ENCODE measurements at regions of chr19 and their contacts with region 1.

Region 1: DNA sequence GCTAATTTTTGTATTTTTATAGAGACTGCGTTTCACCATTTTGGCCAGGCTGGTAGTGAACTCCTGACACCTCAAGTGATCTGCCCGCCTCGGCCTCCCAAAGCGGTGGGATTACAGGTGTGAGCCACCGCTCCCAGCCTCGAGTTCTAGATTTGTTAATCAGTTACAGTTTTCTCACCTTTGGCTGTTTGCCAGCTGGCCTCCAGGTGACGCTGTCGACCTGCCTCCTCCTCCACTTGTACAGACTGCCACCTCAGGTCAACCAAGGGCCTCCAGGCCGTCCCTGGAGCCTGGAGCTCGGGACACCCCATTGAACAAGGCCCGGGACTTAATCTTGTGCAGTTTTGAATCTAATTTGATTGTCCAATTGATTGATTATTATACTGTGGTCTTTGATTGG is 45.5 kb downstream of the IER2 start:
- DNase-seq: peak; percentile 77
- ATAC-seq: peak; percentile 67
- H3K4me3 ChIP-seq: no peak overlapping the region
- H3K4me3 Mint-ChIP-seq: no peak overlapping the region
- H3K27ac ChIP-seq: no peak overlapping the region
- H3K27ac Mint-ChIP-seq: peak overlapping the region; percentile 67
- H3K4me1 ChIP-seq: peaks cover 26 to 35% of the 10 kb centered on the region in 2 donors
- H3K4me1 Mint-ChIP-seq: peaks cover 21% of the 10 kb centered on the region
- H3K27me3 ChIP-seq: no peaks in the 10 kb centered on the region
- H3K27me3 Mint-ChIP-seq: no peaks in the 10 kb centered on the region
- CTCF ChIP-seq: peak; percentile 82

Region 2: DNA sequence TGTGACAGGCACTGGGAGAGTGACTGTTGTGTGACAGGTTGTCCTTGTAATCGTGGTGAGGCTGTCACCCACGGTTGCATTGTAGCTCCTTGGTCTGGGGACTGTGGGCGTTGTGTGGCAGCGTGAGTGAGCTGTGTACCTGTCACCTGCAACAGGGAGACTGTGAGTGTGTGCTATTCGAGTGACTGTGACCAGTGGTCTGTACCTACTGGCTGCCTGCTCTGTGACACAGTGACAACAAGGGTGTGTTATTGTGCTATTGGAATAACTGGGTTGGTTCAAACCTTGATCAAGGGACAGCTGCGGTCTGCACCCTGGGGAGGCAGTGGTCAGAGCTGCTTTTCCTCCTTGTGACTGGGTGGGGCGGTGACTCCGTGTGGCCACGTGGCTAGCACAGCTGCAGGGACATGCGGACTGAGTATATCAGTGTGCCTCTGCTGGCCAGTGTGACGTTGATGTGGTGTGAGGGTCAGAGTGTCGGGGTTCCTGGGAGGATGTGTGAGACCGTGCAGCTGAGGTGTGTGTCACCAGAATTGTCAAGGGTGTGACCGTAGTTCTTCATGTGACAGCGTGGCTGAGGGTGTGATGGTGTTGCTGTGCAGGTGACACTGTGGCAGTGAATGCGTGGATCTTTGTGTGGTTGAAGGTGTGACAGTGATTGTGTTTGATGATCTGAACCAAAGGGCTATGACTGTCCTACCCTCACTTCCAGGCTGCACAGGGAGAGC is 210.5 kb before region 1 on chr19:
- CTCF ChIA-PET with region 1: no interaction called
- POLR2A ChIA-PET with region 1: no interaction called
- intact Hi-C with region 1: no loop called
- DNase-seq: peak; percentile 70
- ATAC-seq: peak; percentile 42
- H3K4me3 ChIP-seq: no peak overlapping the region
- H3K4me3 Mint-ChIP-seq: peak overlapping the region; percentile 7
- H3K27ac ChIP-seq: no peak overlapping the region
- H3K27ac Mint-ChIP-seq: peak overlapping the region; percentile 39
- H3K4me1 ChIP-seq: peaks cover 26 to 37% of the 10 kb centered on the region in 2 donors
- H3K4me1 Mint-ChIP-seq: peaks cover 10% of the 10 kb centered on the region
- H3K27me3 ChIP-seq: peaks cover 0 to 10% (median 2%) of the 10 kb centered on the region in 4 experiments
- H3K27me3 Mint-ChIP-seq: peaks cover 4% of the 10 kb centered on the region
- CTCF ChIP-seq: no peak

Region 3: DNA sequence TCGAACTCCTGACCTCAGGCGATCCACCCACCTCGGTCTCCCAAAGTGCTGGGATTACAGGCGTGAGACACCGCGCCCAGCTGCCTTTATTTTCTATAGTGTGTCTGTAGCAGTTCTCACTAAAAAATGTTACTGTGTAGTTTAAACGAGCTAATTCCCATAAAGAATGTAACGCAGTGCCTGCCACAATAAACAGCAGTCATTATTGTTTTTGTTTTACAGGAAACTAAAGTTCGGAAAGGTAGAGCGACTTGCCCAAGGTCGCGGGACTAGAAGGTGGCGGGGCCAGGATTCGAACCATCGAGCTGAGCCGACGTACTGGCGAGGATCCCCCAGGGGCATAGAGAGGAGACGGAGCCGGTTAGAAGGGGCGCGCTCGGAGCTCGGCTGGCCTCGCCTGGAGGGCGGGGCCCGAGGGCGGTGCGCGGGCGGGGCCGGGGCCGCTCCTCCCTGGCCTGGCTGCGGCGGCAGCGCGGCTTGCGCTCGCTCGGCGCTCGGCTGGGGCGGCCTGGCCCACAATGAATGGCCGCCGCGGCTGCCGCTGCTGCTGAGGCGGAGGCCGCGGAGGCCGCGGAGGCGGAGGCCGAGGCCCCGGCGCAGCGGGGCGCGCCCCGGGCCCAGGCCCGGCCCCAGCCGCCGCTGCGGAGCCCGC is 77.8 kb before region 1 on chr19 and contains the start of gene NACC1:
- CTCF ChIA-PET with region 1: interaction called, 11 read pairs
- POLR2A ChIA-PET with region 1: no interaction called
- intact Hi-C with region 1: no loop called
- DNase-seq: peak; percentile 92
- ATAC-seq: peak; percentile 78
- H3K4me3 ChIP-seq: peak within 1 kb of the TSS; percentile 81 to 97 (median 85)
- H3K4me3 Mint-ChIP-seq: peak within 1 kb of the TSS; percentile 99
- H3K27ac ChIP-seq: peak within 1 kb of the TSS; percentile 47 to 81
- H3K27ac Mint-ChIP-seq: peak within 1 kb of the TSS; percentile 95
- H3K4me1 ChIP-seq: peaks cover 26 to 46% of the 10 kb centered on the region in 2 donors
- H3K4me1 Mint-ChIP-seq: peaks cover 55% of the 10 kb centered on the region
- H3K27me3 ChIP-seq: no peaks in the 10 kb centered on the region
- H3K27me3 Mint-ChIP-seq: no peaks in the 10 kb centered on the region
- CTCF ChIP-seq: no peak
- total RNA-seq, gene NACC1: 25.9 and 30.6 TPM in 2 replicates

Region 4: GRCh38 chr19:13162518-13163314 is 33.0 kb before region 1 on chr19:
- CTCF ChIA-PET with region 1: interaction called, 154 read pairs
- POLR2A ChIA-PET with region 1: interaction called, 19 read pairs
- intact Hi-C with region 1: no loop called
- DNase-seq: peak; percentile 85
- ATAC-seq: peak; percentile 42
- H3K4me3 ChIP-seq: peak overlapping the region; percentile 24 to 71 (median 61)
- H3K4me3 Mint-ChIP-seq: peak overlapping the region; percentile 92
- H3K27ac ChIP-seq: peak overlapping the region; percentile 85 to 94
- H3K27ac Mint-ChIP-seq: peak overlapping the region; percentile 97
- H3K4me1 ChIP-seq: peaks cover 84 to 96% of the 10 kb centered on the region in 2 donors
- H3K4me1 Mint-ChIP-seq: peaks cover 62% of the 10 kb centered on the region
- H3K27me3 ChIP-seq: no peaks in the 10 kb centered on the region
- H3K27me3 Mint-ChIP-seq: no peaks in the 10 kb centered on the region
- CTCF ChIP-seq: no peak

Region 5: GRCh38 chr19:13207237-13207845 is 11.7 kb after region 1 on chr19:
- CTCF ChIA-PET with region 1: interaction called, 64 read pairs
- POLR2A ChIA-PET with region 1: interaction called, 4 read pairs
- intact Hi-C with region 1: no loop called
- DNase-seq: peak; percentile 29
- ATAC-seq: no peak
- H3K4me3 ChIP-seq: peak overlapping the region in 3 of 5 experiments; percentile 57 to 70 (median 65)
- H3K4me3 Mint-ChIP-seq: no peak overlapping the region
- H3K27ac ChIP-seq: peak overlapping the region in 1 of 2 donors; percentile 87
- H3K27ac Mint-ChIP-seq: peak overlapping the region; percentile 94
- H3K4me1 ChIP-seq: peaks cover 40 to 52% of the 10 kb centered on the region in 2 donors
- H3K4me1 Mint-ChIP-seq: peaks cover 43% of the 10 kb centered on the region
- H3K27me3 ChIP-seq: no peaks in the 10 kb centered on the region
- H3K27me3 Mint-ChIP-seq: no peaks in the 10 kb centered on the region
- CTCF ChIP-seq: no peak

Region 6: GRCh38 chr19:13255041-13255718 is 59.5 kb after region 1 on chr19:
- CTCF ChIA-PET with region 1: interaction called, 10 read pairs
- POLR2A ChIA-PET with region 1: no interaction called
- intact Hi-C with region 1: no loop called
- DNase-seq: no peak
- ATAC-seq: no peak
- H3K4me3 ChIP-seq: no peak overlapping the region
- H3K4me3 Mint-ChIP-seq: no peak overlapping the region
- H3K27ac ChIP-seq: no peak overlapping the region
- H3K27ac Mint-ChIP-seq: no peak overlapping the region
- H3K4me1 ChIP-seq: no peaks in the 10 kb centered on the region
- H3K4me1 Mint-ChIP-seq: no peaks in the 10 kb centered on the region
- H3K27me3 ChIP-seq: peaks cover 0 to 9% (median 3%) of the 10 kb centered on the region in 4 experiments
- H3K27me3 Mint-ChIP-seq: peaks cover 18% of the 10 kb centered on the region
- CTCF ChIP-seq: no peak

Region 7: GRCh38 chr19:13277104-13277809 is 81.6 kb after region 1 on chr19:
- CTCF ChIA-PET with region 1: interaction called, 14 read pairs
- POLR2A ChIA-PET with region 1: interaction called, 9 read pairs
- intact Hi-C with region 1: no loop called
- DNase-seq: peak; percentile 89
- ATAC-seq: peak; percentile 94
- H3K4me3 ChIP-seq: peak overlapping the region in 2 of 5 experiments; percentile 25 to 42
- H3K4me3 Mint-ChIP-seq: peak overlapping the region; percentile 59
- H3K27ac ChIP-seq: peak overlapping the region; percentile 29 to 62
- H3K27ac Mint-ChIP-seq: peak overlapping the region; percentile 87
- H3K4me1 ChIP-seq: peaks cover 6 to 11% of the 10 kb centered on the region in 2 donors
- H3K4me1 Mint-ChIP-seq: peaks cover 17% of the 10 kb centered on the region
- H3K27me3 ChIP-seq: peaks cover 0 to 7% (median under 1%) of the 10 kb centered on the region in 4 experiments
- H3K27me3 Mint-ChIP-seq: peaks cover 17% of the 10 kb centered on the region
- CTCF ChIP-seq: peak; percentile 69

Measured in B cell (primary cell).